CD8-positive, alpha-beta memory T cell (primary cell): ENCODE measurements at regions of chr1 and their contacts with region 1.

Region 1: GRCh38 chr1:16366722-16367257 is at the start of gene SZRD1:
- DNase-seq: peak; percentile 94 to 98 (median 95)
- H3K4me3 ChIP-seq: peak within 1 kb of the TSS; percentile 98
- H3K4me3 Mint-ChIP-seq: peak within 1 kb of the TSS; percentile 86 to 99 (median 98)
- H3K27ac ChIP-seq: peak within 1 kb of the TSS; percentile 99
- H3K27ac Mint-ChIP-seq: peak within 1 kb of the TSS; percentile 99 to 100 (median 99)
- H3K4me1 ChIP-seq: peaks cover 35% of the 10 kb centered on the region
- H3K4me1 Mint-ChIP-seq: peaks cover 32 to 42% (median 42%) of the 10 kb centered on the region in 3 donors
- H3K27me3 ChIP-seq: no peaks in the 10 kb centered on the region
- H3K27me3 Mint-ChIP-seq: no peaks in the 10 kb centered on the region
- total RNA-seq, gene SZRD1: 208 to 216 TPM

Region 2: GRCh38 chr1:16206547-16207317 is 160.1 kb before region 1 on chr1:
- CTCF ChIA-PET with region 1: no interaction called
- POLR2A ChIA-PET with region 1: no interaction called
- DNase-seq: peak; percentile 89 to 95 (median 93)
- H3K4me3 ChIP-seq: peak overlapping the region; percentile 77
- H3K4me3 Mint-ChIP-seq: peak overlapping the region; percentile 89 to 96 (median 93)
- H3K27ac ChIP-seq: peak overlapping the region; percentile 85
- H3K27ac Mint-ChIP-seq: peak overlapping the region; percentile 93 to 99 (median 96)
- H3K4me1 ChIP-seq: peaks cover 16% of the 10 kb centered on the region
- H3K4me1 Mint-ChIP-seq: peaks cover 15 to 17% (median 16%) of the 10 kb centered on the region in 3 donors
- H3K27me3 ChIP-seq: no peaks in the 10 kb centered on the region
- H3K27me3 Mint-ChIP-seq: peaks cover 0 to 2% of the 10 kb centered on the region in 2 donors

Region 3: GRCh38 chr1:16351994-16352841 is 14.6 kb before region 1 on chr1 and contains the start of gene FBXO42:
- CTCF ChIA-PET with region 1: interaction called, 72 read pairs
- POLR2A ChIA-PET with region 1: interaction called, 10 read pairs
- DNase-seq: peak; percentile 87 to 97 (median 95)
- H3K4me3 ChIP-seq: peak within 1 kb of the TSS; percentile 90
- H3K4me3 Mint-ChIP-seq: peak within 1 kb of the TSS; percentile 86 to 99 (median 95)
- H3K27ac ChIP-seq: peak within 1 kb of the TSS; percentile 89
- H3K27ac Mint-ChIP-seq: peak within 1 kb of the TSS; percentile 90 to 99 (median 96)
- H3K4me1 ChIP-seq: peaks cover 31% of the 10 kb centered on the region
- H3K4me1 Mint-ChIP-seq: peaks cover 29 to 42% (median 40%) of the 10 kb centered on the region in 3 donors
- H3K27me3 ChIP-seq: no peaks in the 10 kb centered on the region
- H3K27me3 Mint-ChIP-seq: no peaks in the 10 kb centered on the region
- total RNA-seq, gene FBXO42: 15.7 to 16.9 TPM